Activated T-helper 1 cell treated with anti-CD3 and anti-CD28 coated beads, Interleukin-12 subunit alpha, Interleukin-12 subunit beta, Interleukin-2, Interleukin-4 antibody, amounts not matched to agents 30 ng/mL and 10 ng/mL and 1 ng/mL, durations not matched to agents 14 hours and 24 hours and 36 hours (primary cell): ENCODE measurements at regions of chr6 and their contacts with region 1.

Region 1: DNA sequence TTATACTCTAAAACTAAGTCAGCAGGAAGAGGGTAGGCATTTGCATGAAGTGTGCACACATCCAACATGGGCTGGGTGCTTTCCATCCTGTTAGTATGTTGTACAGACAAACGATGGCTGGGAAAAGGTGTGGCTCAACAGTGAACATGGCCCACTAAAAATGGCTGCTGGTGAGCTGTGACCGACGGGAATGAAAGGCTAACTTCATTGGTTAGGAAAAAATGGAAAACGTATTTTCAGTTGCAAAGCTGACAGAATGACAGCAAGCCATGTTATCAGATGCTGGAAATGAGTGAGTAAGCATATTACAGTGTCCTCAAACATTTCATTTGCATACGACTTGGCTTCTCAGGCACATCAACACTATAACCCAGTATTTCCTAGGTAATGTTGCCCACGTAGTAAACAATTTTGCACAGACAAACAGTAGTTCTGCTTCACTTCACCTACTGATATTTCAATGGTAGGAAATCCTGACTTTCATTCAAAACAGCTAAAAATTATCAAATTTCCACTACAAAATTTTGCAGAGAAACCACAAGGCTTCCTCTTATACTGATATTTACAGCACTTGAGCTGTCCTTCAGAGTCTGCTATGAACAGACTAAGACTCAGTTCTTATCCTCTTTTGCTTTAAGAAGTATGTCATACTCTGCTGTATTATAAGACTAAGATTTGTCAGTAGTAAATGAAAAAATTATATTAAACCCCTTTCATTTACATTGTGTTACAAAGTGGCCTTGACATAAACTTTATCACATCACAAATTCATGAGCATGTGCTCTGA is 98.9 kb downstream of the IRF4 start:
- DNase-seq: peak; percentile 40
- H3K4me3 Mint-ChIP-seq: peak overlapping the region; percentile 62
- H3K27ac Mint-ChIP-seq: peak overlapping the region; percentile 99
- H3K4me1 Mint-ChIP-seq: peaks cover 77% of the 10 kb centered on the region
- H3K27me3 Mint-ChIP-seq: no peaks in the 10 kb centered on the region

Region 2: DNA sequence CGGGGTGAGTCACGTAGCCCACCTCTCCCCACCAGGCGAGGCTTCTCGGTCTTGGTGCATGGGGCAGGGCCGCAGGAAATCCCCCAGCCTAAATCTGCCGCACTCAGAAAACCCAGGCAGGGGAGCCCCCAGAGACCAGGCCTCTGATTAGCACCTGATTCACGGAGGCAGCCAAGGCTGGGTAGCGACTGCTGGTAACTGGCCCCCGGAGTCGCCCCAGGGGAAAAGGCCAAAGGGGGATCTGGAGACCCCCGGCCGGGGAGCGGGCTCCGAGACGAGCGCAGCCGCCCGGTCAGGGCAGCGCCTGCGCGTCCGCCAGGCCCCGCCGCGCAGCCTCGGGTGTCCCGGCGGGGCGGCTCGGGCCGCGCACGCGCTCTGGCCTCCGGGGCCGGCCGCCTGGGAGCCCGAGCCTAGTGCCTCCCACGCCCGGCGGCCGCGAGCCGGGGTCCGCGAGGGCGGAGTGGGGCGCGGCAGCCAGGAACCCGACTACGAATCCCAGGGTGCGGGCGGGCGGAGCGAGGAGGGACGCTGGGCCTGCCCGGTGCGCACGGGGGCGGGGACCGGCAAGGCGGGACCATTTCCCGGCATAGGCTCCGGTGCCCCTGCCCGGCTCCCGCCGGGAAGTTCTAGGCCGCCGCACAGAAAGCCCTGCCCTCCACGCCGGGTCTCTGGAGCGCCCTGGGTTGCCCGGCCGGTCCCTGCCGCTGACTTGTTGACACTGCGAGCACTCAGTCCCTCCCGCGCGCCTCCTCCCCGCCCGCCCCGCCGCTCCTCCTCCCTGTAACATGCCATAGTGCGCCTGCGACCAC is 198.5 kb before region 1 on chr6 and contains the start of gene DUSP22:
- intact Hi-C with region 1: loop called (anchors 2 kb)
- DNase-seq: peak; percentile 79
- H3K4me3 Mint-ChIP-seq: peak within 1 kb of the TSS; percentile 94
- H3K27ac Mint-ChIP-seq: peak within 1 kb of the TSS; percentile 99
- H3K4me1 Mint-ChIP-seq: peaks cover 39% of the 10 kb centered on the region
- H3K27me3 Mint-ChIP-seq: no peaks in the 10 kb centered on the region
- total RNA-seq, gene DUSP22: 22.0 and 22.1 TPM in 2 replicates

Region 3: GRCh38 chr6:422433-423054 is 67.9 kb before region 1 on chr6:
- intact Hi-C with region 1: loop called (anchors 1 kb)
- DNase-seq: peak; percentile 67
- H3K4me3 Mint-ChIP-seq: no peak overlapping the region
- H3K27ac Mint-ChIP-seq: peak overlapping the region; percentile 52
- H3K4me1 Mint-ChIP-seq: peaks cover 39% of the 10 kb centered on the region
- H3K27me3 Mint-ChIP-seq: no peaks in the 10 kb centered on the region

Region 4: GRCh38 chr6:474453-475185 is 15.8 kb before region 1 on chr6:
- intact Hi-C with region 1: loop called (anchors 1 kb)
- DNase-seq: peak; percentile 75
- H3K4me3 Mint-ChIP-seq: peak overlapping the region; percentile 72
- H3K27ac Mint-ChIP-seq: peak overlapping the region; percentile 86
- H3K4me1 Mint-ChIP-seq: peaks cover 75% of the 10 kb centered on the region
- H3K27me3 Mint-ChIP-seq: no peaks in the 10 kb centered on the region

Region 5: DNA sequence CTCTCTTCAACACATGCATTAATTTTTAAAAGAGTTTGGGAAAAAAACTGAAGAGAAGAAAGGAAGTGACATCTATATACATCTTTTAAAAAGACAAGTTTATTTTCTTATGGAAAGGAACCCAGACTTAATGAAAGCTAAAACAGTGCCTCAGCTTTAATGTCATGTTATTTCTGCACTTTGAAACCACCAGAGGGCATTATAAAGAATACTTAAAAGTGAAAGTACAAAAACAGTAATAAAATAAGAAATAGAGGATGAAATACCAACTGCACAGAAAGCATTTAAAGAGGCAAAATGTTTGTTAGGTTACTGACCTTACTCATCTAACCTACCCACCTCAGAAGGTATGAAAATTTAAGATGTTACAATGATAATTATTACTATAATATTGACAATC is 67.6 kb after region 1 on chr6:
- intact Hi-C with region 1: loop called (anchors 1 kb)
- DNase-seq: no peak
- H3K4me3 Mint-ChIP-seq: no peak overlapping the region
- H3K27ac Mint-ChIP-seq: peak overlapping the region; percentile 55
- H3K4me1 Mint-ChIP-seq: peaks cover 50% of the 10 kb centered on the region
- H3K27me3 Mint-ChIP-seq: no peaks in the 10 kb centered on the region

Region 6: GRCh38 chr6:642805-643204 is 152.4 kb after region 1 on chr6:
- intact Hi-C with region 1: no loop called
- DNase-seq: no peak
- H3K4me3 Mint-ChIP-seq: no peak overlapping the region
- H3K27ac Mint-ChIP-seq: no peak overlapping the region
- H3K4me1 Mint-ChIP-seq: no peaks in the 10 kb centered on the region
- H3K27me3 Mint-ChIP-seq: no peaks in the 10 kb centered on the region